ENCODE measurements at regions of chr1 and their contacts with region 1.

Region 1: GRCh38 chr1:156226116-156226538 is 13.3 kb downstream of the PMF1 start:
- DNase-seq: no peak
- H3K4me3 ChIP-seq: no peak overlapping the region
- H3K27ac ChIP-seq: peak overlapping the region in 3 of 4 donors; percentile 15 to 47 (median 30)
- H3K4me1 ChIP-seq: peaks cover 0 to 10% (median 4%) of the 10 kb centered on the region in 4 donors
- H3K27me3 ChIP-seq: no peaks in the 10 kb centered on the region
- CTCF ChIP-seq: no peak
- EP300 ChIP-seq: no peak
- POLR2A ChIP-seq: no peak

Region 2: DNA sequence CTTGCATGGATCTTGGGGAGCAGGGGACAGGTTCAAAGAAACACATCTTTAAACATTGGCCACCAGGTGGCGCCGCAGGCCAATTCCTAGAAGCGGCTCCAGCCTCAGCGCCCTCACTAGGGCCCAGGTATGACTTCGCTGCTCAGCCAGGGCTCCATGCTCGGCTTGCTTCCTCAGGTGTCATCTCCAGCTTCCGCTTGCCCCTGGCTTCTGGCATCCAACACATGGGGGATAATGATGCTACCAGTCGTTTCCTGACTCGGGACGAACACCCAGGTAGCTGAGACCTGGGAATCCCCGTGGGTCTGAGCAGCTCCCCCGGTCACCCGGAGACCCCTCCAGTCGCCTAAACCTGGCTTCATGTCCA is 135.3 kb before region 1 on chr1:
- in situ Hi-C with region 1: loop called (anchors 5 to 25 kb)
- intact Hi-C with region 1: loop called (anchors 2 kb)
- DNase-seq: peak; percentile 91
- H3K4me3 ChIP-seq: no peak overlapping the region
- H3K27ac ChIP-seq: no peak overlapping the region
- H3K4me1 ChIP-seq: peaks cover 0 to 10% (median 1%) of the 10 kb centered on the region in 4 donors
- H3K27me3 ChIP-seq: no peaks in the 10 kb centered on the region
- CTCF ChIP-seq: peak; percentile 82 to 88 (median 87)
- EP300 ChIP-seq: no peak
- POLR2A ChIP-seq: no peak

Region 3: GRCh38 chr1:156096640-156097391 is 129.3 kb before region 1 on chr1:
- in situ Hi-C with region 1: loop called (anchors 5 to 25 kb)
- intact Hi-C with region 1: no loop called
- DNase-seq: peak; percentile 93
- H3K4me3 ChIP-seq: no peak overlapping the region
- H3K27ac ChIP-seq: peak overlapping the region; percentile 57 to 80 (median 77)
- H3K4me1 ChIP-seq: peaks cover 8 to 46% (median 20%) of the 10 kb centered on the region in 4 donors
- H3K27me3 ChIP-seq: no peaks in the 10 kb centered on the region
- CTCF ChIP-seq: peak; percentile 93 to 97 (median 94)
- EP300 ChIP-seq: no peak
- POLR2A ChIP-seq: no peak

Region 4: GRCh38 chr1:156140879-156141252 is 85.3 kb before region 1 on chr1:
- in situ Hi-C with region 1: loop called (anchors 5 kb)
- intact Hi-C with region 1: loop called (anchors 2 kb)
- DNase-seq: no peak
- H3K4me3 ChIP-seq: no peak overlapping the region
- H3K27ac ChIP-seq: peak overlapping the region; percentile 21 to 82 (median 62)
- H3K4me1 ChIP-seq: peaks cover 0 to 18% (median 11%) of the 10 kb centered on the region in 4 donors
- H3K27me3 ChIP-seq: no peaks in the 10 kb centered on the region
- CTCF ChIP-seq: no peak
- EP300 ChIP-seq: no peak
- POLR2A ChIP-seq: no peak

Region 5: GRCh38 chr1:156146020-156146768 is 79.9 kb before region 1 on chr1:
- in situ Hi-C with region 1: loop called (anchors 5 kb)
- intact Hi-C with region 1: loop called (anchors 2 kb)
- DNase-seq: peak; percentile 55
- H3K4me3 ChIP-seq: peak overlapping the region in 1 of 4 donors; percentile 16
- H3K27ac ChIP-seq: peak overlapping the region in 1 of 4 donors; percentile 36
- H3K4me1 ChIP-seq: peaks cover 12 to 21% (median 15%) of the 10 kb centered on the region in 4 donors
- H3K27me3 ChIP-seq: no peaks in the 10 kb centered on the region
- CTCF ChIP-seq: peak; percentile 64 to 85 (median 73)
- EP300 ChIP-seq: no peak
- POLR2A ChIP-seq: no peak